ENCODE measurements at regions of chr1 and their contacts with region 1.

Region 1: DNA sequence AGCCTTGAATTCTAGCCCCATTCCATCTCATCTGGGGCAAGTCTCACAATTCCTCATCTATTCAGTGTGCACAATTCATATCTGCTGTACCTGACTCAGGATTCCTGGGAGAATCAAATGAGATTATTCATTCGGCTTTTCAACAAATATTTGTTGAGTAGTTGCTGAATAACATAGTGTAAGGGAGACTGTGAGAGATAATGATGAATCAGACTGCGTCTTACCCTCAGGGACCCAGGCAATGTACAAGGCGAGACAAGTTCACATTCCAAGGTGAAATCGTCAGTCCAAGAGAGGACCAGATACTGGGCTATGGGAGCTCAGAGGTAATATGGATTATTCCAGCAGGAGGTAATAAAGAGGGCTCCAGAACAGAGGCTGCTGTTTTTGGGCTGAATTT is 67.8 kb upstream of the SMYD2 start:
- DNase-seq: peak; percentile 82
- H3K4me3 Mint-ChIP-seq: peak overlapping the region; percentile 15
- H3K27ac Mint-ChIP-seq: peak overlapping the region; percentile 7
- H3K4me1 Mint-ChIP-seq: peaks cover 20% of the 10 kb centered on the region
- H3K27me3 Mint-ChIP-seq: no peaks in the 10 kb centered on the region
- CTCF ChIP-seq: peak; percentile 25

Region 2: GRCh38 chr1:213122514-213122929 is 1090.6 kb before region 1 on chr1:
- CTCF ChIA-PET with region 1: interaction called, 6 read pairs
- POLR2A ChIA-PET with region 1: no interaction called
- intact Hi-C with region 1: loop called (anchors 5 kb)
- DNase-seq: peak; percentile 75
- H3K4me3 Mint-ChIP-seq: no peak overlapping the region
- H3K27ac Mint-ChIP-seq: peak overlapping the region; percentile 61
- H3K4me1 Mint-ChIP-seq: peaks cover 26% of the 10 kb centered on the region
- H3K27me3 Mint-ChIP-seq: no peaks in the 10 kb centered on the region
- CTCF ChIP-seq: peak; percentile 74

Region 3: DNA sequence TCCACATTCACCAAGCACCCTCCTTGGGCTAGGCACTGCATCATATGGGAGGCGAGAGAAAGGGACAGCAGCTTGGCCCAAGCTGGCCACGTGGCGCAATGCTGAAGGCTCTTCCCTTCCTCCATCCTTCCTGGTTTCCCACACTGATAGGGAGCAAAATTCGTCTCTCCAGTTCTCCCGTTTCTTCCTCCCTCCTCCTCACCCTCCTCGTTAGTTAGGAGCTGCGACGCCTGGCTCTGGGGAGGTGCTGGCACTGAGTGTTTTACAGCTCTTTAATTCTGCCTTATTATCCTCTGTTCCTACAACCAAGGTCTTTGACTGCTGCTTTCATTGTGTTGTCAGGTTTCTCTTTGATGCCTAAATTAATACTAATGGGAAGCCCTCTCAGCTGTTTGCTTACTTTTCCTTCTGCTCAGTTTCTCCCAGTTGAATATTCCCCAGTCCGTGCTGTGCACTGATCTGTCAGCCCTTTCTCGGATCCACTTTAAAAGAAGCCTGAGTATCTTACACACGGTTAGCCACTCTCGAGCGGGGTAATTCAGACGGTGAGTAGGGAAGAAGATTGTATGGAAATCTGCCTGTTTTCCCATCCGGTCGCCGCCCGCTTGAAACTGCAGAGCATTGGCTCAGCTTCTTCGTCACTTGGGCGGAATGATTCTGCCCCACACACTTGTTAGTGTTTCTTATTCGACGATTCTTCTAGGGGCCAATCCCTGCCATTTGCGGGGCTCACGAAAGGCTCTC is 11.6 kb after region 1 on chr1:
- CTCF ChIA-PET with region 1: interaction called, 92 read pairs
- POLR2A ChIA-PET with region 1: interaction called, 4 read pairs
- intact Hi-C with region 1: no loop called
- DNase-seq: no peak
- H3K4me3 Mint-ChIP-seq: no peak overlapping the region
- H3K27ac Mint-ChIP-seq: no peak overlapping the region
- H3K4me1 Mint-ChIP-seq: peaks cover 4% of the 10 kb centered on the region
- H3K27me3 Mint-ChIP-seq: peaks cover 21% of the 10 kb centered on the region
- CTCF ChIP-seq: no peak

Region 4: DNA sequence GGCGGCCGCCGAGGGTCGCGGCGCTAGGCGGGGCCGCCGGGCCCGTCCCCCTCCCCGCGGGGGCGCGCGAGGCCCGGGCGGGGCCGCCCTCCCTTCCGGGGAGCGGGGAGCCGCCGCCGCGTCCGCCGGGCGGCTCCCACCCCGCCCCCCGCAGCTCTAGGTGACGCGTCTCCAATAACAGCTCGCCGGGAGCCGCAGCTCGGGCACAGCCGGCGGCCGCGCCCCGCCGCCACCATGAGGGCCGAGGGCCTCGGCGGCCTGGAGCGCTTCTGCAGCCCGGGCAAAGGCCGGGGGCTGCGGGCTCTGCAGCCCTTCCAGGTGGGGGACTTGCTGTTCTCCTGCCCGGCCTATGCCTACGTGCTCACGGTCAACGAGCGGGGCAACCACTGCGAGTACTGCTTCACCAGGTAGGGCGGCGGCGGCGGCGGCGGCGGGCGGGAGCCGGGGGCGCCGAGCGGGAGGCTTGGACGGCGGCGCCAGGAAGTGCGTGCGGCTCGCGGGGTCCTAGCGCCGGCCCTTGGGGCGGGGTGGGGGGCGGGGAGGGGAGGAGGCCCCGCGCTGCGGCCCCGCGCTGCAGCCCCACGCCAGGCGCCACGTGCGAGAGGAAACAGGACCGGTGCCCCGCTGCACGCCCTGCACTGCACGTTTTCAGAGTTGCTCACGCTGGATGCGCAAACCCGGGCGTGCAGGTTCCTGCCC is 68.0 kb after region 1 on chr1 and contains the start of gene SMYD2:
- CTCF ChIA-PET with region 1: interaction called, 9 read pairs
- POLR2A ChIA-PET with region 1: interaction called, 10 read pairs
- intact Hi-C with region 1: no loop called
- DNase-seq: peak; percentile 84
- H3K4me3 Mint-ChIP-seq: peak within 1 kb of the TSS; percentile 89
- H3K27ac Mint-ChIP-seq: peak within 1 kb of the TSS; percentile 84
- H3K4me1 Mint-ChIP-seq: peaks cover 37% of the 10 kb centered on the region
- H3K27me3 Mint-ChIP-seq: no peaks in the 10 kb centered on the region
- CTCF ChIP-seq: no peak
- total RNA-seq, gene SMYD2: 54.5 and 75.1 TPM in 2 replicates

Region 5: DNA sequence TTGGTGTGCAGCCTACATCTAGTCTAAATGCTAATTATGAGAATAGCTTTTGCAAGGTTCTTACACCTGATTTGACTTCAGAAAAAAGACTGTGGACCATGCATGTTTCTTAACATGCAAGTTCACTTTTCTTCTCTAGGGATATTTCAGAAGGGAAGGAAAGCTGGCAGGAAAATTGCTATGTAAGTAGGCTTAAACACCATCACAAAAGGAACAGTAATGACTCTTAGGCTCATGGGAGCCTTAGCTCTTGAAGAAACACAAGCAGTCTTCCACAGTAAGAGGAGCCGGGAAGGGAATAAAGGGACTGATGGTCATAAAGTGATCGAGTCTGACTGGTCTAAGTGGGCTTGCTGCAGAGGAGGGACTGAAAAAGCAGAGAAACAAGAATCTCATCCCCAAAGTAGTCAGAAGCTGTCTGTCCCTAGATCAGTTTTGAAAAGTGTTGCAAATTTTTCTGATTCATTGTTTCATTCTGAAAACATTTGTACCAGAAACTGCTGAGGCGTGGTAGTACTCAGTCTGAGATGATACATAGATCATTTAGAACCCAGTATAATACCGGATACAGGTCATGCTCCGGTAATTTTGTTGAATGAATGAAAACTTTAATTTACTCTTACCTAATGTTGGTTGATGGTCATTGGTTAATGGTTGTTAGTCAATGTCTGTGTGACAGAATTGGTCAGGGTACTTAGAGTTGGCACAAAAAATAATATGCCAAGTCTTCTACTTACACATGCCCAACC is 108.7 kb after region 1 on chr1:
- CTCF ChIA-PET with region 1: interaction called, 804 read pairs
- POLR2A ChIA-PET with region 1: interaction called, 75 read pairs
- intact Hi-C with region 1: no loop called
- DNase-seq: no peak
- H3K4me3 Mint-ChIP-seq: no peak overlapping the region
- H3K27ac Mint-ChIP-seq: no peak overlapping the region
- H3K4me1 Mint-ChIP-seq: no peaks in the 10 kb centered on the region
- H3K27me3 Mint-ChIP-seq: no peaks in the 10 kb centered on the region
- CTCF ChIP-seq: no peak

Region 6: GRCh38 chr1:214623430-214623829 is 410.3 kb after region 1 on chr1:
- CTCF ChIA-PET with region 1: interaction called, 47 read pairs
- POLR2A ChIA-PET with region 1: no interaction called
- intact Hi-C with region 1: loop called (anchors 2 kb)
- DNase-seq: peak; percentile 42
- H3K4me3 Mint-ChIP-seq: no peak overlapping the region
- H3K27ac Mint-ChIP-seq: peak overlapping the region; percentile 36
- H3K4me1 Mint-ChIP-seq: peaks cover 11% of the 10 kb centered on the region
- H3K27me3 Mint-ChIP-seq: no peaks in the 10 kb centered on the region
- CTCF ChIP-seq: no peak

Region 7: DNA sequence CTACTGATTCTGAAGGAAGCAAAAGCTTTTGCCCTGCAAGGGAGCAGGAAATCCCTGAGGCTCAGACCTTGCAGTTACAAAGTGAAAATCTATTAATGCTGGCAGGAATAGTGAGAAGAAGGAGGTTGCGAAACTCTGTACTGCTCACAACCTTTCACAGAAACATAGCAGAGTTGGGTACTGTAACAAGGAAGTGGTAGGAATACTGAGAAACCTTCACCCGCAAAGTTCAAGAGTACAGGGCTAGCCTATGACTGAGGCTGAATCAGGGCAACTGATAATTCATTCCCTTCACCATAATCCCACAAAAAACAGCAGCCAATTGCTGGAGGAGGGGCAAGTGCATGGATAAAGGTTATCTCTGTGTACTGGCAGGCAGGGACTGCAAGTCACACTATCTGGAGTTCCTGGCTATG is 1330.1 kb after region 1 on chr1:
- CTCF ChIA-PET with region 1: interaction called, 10 read pairs
- POLR2A ChIA-PET with region 1: no interaction called
- intact Hi-C with region 1: no loop called
- DNase-seq: peak; percentile 79
- H3K4me3 Mint-ChIP-seq: no peak overlapping the region
- H3K27ac Mint-ChIP-seq: peak overlapping the region; percentile 24
- H3K4me1 Mint-ChIP-seq: peaks cover 35% of the 10 kb centered on the region
- H3K27me3 Mint-ChIP-seq: no peaks in the 10 kb centered on the region
- CTCF ChIP-seq: no peak

Measured in MCF 10A (cell line).